ENCODE measurements at regions of chr2 and their contacts with region 1.

Region 1: DNA sequence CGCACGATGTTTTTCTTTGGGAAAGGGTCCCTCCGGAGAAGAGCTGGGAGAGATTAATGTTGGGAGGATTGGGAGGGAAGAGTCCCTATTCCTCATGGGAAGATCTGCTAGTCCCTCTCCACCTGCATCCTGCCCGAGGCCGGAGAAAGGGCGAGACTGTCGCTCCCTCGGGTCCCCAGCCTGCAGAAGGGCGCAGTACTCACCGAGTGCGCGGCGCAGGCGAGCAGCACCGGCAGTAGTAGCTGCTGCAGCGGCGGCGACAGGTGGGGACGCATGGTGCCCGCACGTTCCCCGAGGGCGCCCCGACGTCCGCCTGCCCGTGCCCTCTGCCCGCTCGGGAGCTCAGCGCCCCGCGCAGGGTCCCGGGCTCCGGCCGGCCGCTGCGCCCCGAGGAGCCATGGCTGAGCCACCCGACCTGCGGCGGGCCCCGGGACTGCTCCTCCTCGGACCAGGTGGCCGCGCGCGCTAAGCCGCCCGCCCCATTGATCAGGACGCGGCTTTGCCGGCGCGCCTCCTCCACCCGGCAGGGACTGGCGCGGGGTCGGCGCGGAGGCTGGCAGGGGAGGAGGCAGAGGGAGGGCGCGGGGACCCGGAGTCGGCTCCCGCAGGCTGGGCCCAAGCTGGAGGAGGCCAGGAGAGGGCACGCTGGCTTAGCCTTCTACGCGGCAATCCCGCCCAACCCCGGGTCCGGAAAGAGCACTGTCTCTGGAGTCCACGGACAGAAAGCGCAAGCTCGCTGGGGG is at the start of gene SCTR:
- DNase-seq: peak; percentile 29 to 79 (median 48)
- ATAC-seq: peak; percentile 36 to 77 (median 76)
- H3K4me3 ChIP-seq: peak within 1 kb of the TSS; percentile 31 to 57 (median 40)
- H3K27ac ChIP-seq: peak within 1 kb of the TSS; percentile 67 to 88 (median 79)
- H3K4me1 ChIP-seq: no peaks in the 10 kb centered on the region
- H3K27me3 ChIP-seq: peaks cover 0 to 4% (median 0%) of the 10 kb centered on the region in 4 donors
- CTCF ChIP-seq: peak in 1 of 4 donors; percentile 8
- total RNA-seq, gene SCTR: 31.9 to 93.8 (median 69.0) TPM

Region 2: DNA sequence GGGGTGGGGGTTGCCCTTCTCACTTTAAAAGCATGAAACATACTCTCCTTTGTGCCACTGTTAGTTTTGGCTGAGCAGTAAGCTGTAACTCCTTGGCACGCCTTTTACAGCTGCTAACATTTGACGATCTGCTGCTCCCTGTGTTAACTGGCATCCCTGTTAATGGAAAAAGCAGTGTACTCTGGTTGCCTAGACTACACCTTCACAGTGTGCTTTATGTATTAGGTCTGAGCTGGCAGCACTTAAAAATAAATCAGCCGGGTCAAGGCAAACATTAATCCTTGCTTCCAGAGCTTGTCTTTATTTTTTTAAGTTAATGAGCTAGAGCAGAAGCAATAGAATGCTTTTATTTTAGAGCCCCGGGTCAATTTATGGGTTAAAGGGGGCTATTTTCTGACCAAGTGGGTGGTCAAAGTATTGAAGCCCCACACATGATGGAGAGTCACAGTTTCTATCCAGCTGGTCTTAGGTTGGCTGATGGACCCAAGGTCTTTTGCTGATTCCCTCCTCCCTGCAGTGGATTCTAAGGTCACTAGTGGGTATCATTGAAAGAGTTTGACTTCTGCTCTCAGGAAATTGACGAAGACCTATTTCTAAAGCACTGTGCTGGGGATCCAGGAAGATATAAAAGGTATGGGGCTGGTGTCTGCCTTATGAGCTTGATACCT is 74.6 kb after region 1 on chr2:
- intact Hi-C with region 1: no loop called
- DNase-seq: peak in 3 of 6 donors; percentile 38 to 57 (median 45)
- ATAC-seq: peak; percentile 94 to 97 (median 97)
- H3K4me3 ChIP-seq: no peak overlapping the region
- H3K27ac ChIP-seq: peak overlapping the region in 2 of 4 donors; percentile 67 to 77
- H3K4me1 ChIP-seq: peaks cover 0 to 14% (median 13%) of the 10 kb centered on the region in 3 donors
- H3K27me3 ChIP-seq: no peaks in the 10 kb centered on the region
- CTCF ChIP-seq: no peak

Region 3: GRCh38 chr2:119659601-119660342 is 135.6 kb after region 1 on chr2:
- intact Hi-C with region 1: loop called in 1 of 3 experiments (anchors 5 kb)
- DNase-seq: peak in 4 of 6 donors; percentile 26 to 68 (median 50)
- ATAC-seq: peak; percentile 64 to 91 (median 84)
- H3K4me3 ChIP-seq: no peak overlapping the region
- H3K27ac ChIP-seq: no peak overlapping the region
- H3K4me1 ChIP-seq: no peaks in the 10 kb centered on the region
- H3K27me3 ChIP-seq: no peaks in the 10 kb centered on the region
- CTCF ChIP-seq: peak; percentile 67 to 83 (median 68)

Region 4: GRCh38 chr2:119678998-119679710 is 155.0 kb after region 1 on chr2 and contains the start of gene TMEM177:
- intact Hi-C with region 1: no loop called
- DNase-seq: peak; percentile 88 to 95 (median 92)
- ATAC-seq: peak; percentile 91 to 97 (median 94)
- H3K4me3 ChIP-seq: peak within 1 kb of the TSS; percentile 58 to 95 (median 72)
- H3K27ac ChIP-seq: peak within 1 kb of the TSS; percentile 33 to 61 (median 40)
- H3K4me1 ChIP-seq: peaks cover 0 to 9% (median 3%) of the 10 kb centered on the region in 3 donors
- H3K27me3 ChIP-seq: no peaks in the 10 kb centered on the region
- CTCF ChIP-seq: no peak
- total RNA-seq, gene TMEM177: 3.0 to 5.9 (median 3.7) TPM

Measured in pancreas (tissue), 10 donors.